K562 (cell line): ENCODE measurements at regions of chr1 and their contacts with region 1.

Region 1: GRCh38 chr1:13813398-13814012 is 113.5 kb downstream of the PRDM2 start:
- DNase-seq: peak; percentile 78 to 90 (median 84)
- ATAC-seq: peak; percentile 89
- H3K4me3 ChIP-seq: no peak overlapping the region
- H3K27ac ChIP-seq: no peak overlapping the region
- H3K4me1 ChIP-seq: peaks cover 15 to 21% of the 10 kb centered on the region in 2 experiments
- H3K27me3 ChIP-seq: peaks cover 0 to 22% of the 10 kb centered on the region in 2 experiments; a peak in 2 of 5 replicates
- CTCF ChIP-seq: peak; percentile 86 to 98 (median 89)
- EP300 ChIP-seq: no peak
- POLR2A ChIP-seq: no peak
- RAD21 ChIP-seq: peak; percentile 36 to 80; a peak in 3 of 4 replicates

Region 2: GRCh38 chr1:13662493-13662892 is 151.0 kb before region 1 on chr1:
- CTCF ChIA-PET with region 1: interaction called, 16 read pairs
- POLR2A ChIA-PET with region 1: no interaction called
- in situ Hi-C with region 1: no loop called
- intact Hi-C with region 1: loop called (anchors 1 kb)
- DNase-seq: no peak
- ATAC-seq: no peak
- H3K4me3 ChIP-seq: no peak overlapping the region
- H3K27ac ChIP-seq: no peak overlapping the region
- H3K4me1 ChIP-seq: no peaks in the 10 kb centered on the region
- H3K27me3 ChIP-seq: peaks cover 10 to 15% of the 10 kb centered on the region in 2 experiments; a peak in 4 of 5 replicates
- CTCF ChIP-seq: no peak
- EP300 ChIP-seq: no peak
- POLR2A ChIP-seq: no peak
- RAD21 ChIP-seq: no peak

Region 3: GRCh38 chr1:13935336-13935735 is 121.8 kb after region 1 on chr1:
- CTCF ChIA-PET with region 1: no interaction called
- POLR2A ChIA-PET with region 1: no interaction called
- in situ Hi-C with region 1: no loop called
- intact Hi-C with region 1: no loop called
- DNase-seq: peak in 1 of 4 experiments; percentile 14
- ATAC-seq: no peak
- H3K4me3 ChIP-seq: no peak overlapping the region
- H3K27ac ChIP-seq: no peak overlapping the region
- H3K4me1 ChIP-seq: no peaks in the 10 kb centered on the region
- H3K27me3 ChIP-seq: peaks cover 11 to 12% of the 10 kb centered on the region in 2 experiments; a peak in 4 of 5 replicates
- CTCF ChIP-seq: no peak
- EP300 ChIP-seq: no peak
- POLR2A ChIP-seq: no peak
- RAD21 ChIP-seq: no peak